ENCODE measurements at regions of chr21 and their contacts with region 1.

Region 1: DNA sequence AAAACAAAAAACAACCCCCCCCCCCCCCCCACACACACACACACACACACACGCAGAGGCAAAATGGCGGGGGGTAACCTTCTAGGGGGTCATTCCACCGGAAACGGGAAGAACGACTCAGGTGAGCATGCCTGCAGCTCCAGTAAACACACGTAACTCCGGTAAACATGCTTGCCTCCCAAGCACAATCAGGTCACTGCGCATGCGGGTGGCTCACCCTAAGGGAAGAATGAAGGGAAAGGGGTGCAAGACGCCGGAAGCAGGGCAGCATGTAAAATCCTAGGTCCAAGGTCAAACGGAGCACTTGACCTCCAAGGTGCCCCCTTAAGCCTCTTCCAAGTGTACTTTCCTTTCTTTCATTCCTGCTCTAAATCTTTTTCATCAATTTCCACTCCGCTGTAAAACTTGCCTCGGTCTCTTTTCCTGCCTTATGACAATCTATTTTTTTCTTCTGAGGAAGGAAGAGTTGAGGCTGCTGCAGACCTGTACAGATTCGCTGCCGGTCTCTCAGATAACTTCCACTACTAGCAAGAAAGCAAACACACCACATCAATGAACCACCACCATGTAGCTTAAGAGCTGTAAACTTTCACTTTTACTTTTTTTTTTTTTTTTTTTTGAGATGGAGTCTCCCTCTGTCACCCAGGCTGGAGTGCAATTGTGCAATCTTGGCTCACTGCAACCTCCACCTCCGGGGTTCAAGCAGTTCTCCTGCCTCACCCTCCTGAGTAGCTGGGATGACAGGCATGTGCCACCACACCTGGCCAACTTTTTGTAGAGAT is 21.0 kb upstream of the CBR3 start:
- DNase-seq: no peak
- H3K4me3 ChIP-seq: no peak overlapping the region
- H3K27ac ChIP-seq: no peak overlapping the region
- H3K4me1 ChIP-seq: peaks cover 0 to 10% (median 5%) of the 10 kb centered on the region in 4 experiments; a peak in 6 of 7 replicates
- H3K27me3 ChIP-seq: no peaks in the 10 kb centered on the region
- CTCF ChIP-seq: no peak
- EP300 ChIP-seq: no peak
- POLR2A ChIP-seq: 0 out of 3 replicates have a peak, but pooled peaks of 1 of the 2 experiments have one; percentile 11
- RAD21 ChIP-seq: no peak

Region 2: GRCh38 chr21:36028127-36029069 is 85.4 kb before region 1 on chr21:
- CTCF ChIA-PET with region 1: interaction called, 16 read pairs
- POLR2A ChIA-PET with region 1: no interaction called
- DNase-seq: peak; percentile 50 to 85
- H3K4me3 ChIP-seq: no peak overlapping the region
- H3K27ac ChIP-seq: no peak overlapping the region
- H3K4me1 ChIP-seq: peaks cover 0 to 7% (median under 1%) of the 10 kb centered on the region in 4 experiments; a peak in 3 of 7 replicates
- H3K27me3 ChIP-seq: no peaks in the 10 kb centered on the region
- CTCF ChIP-seq: peak; percentile 93 to 96 (median 94)
- EP300 ChIP-seq: no peak
- POLR2A ChIP-seq: no peak
- RAD21 ChIP-seq: peak; percentile 99 to 100

Region 3: DNA sequence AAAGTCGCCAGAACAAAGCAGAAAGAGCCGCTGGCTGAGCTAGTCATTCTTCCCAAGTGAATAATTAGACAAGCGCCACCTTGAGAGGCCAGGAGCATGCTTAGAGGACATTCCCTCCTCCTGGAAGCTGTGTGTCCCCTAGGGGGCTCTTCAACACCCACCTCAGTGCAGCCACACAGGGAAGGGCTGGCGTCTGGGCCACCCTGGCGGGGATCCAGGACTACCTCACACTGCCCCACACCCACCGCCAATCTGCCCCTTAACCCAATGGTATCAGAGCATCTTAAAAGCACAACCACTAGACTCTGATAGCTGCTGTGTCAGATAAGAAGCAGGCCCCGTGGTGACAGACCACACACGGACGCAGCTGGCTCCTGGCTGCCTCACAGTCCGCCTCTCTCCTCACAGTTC is 78.5 kb before region 1 on chr21:
- CTCF ChIA-PET with region 1: interaction called, 35 read pairs
- POLR2A ChIA-PET with region 1: interaction called, 3 read pairs
- DNase-seq: no peak
- H3K4me3 ChIP-seq: no peak overlapping the region
- H3K27ac ChIP-seq: 0 out of 2 replicates have a peak overlapping the region, but pooled peaks have one; percentile 16
- H3K4me1 ChIP-seq: peaks cover 0 to 6% (median under 1%) of the 10 kb centered on the region in 4 experiments; a peak in 3 of 7 replicates
- H3K27me3 ChIP-seq: no peaks in the 10 kb centered on the region
- CTCF ChIP-seq: peak; percentile 27 to 53 (median 46)
- EP300 ChIP-seq: no peak
- POLR2A ChIP-seq: no peak
- RAD21 ChIP-seq: peak in 1 of 2 experiments; percentile 25; a peak in 1 of 4 replicates

Region 4: DNA sequence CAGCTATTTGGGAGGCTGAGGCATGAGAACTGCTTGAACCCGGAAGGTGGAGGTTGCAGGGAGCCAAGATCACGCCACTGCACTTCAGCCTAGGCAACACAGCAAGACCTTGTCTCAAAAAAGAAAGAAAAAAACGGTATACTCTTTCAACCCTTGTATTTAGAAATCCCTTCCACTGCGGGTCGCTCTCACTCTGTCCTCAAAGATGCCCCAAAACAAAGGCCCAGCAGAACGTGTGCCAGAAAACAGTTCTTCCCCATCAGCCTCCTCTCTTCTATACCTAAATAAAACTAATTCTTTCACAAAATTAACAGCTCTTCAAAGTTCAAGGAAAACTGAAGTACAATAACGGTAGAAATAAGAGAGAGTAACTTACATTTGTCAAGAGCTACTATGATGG is 66.7 kb before region 1 on chr21:
- CTCF ChIA-PET with region 1: interaction called, 13 read pairs
- POLR2A ChIA-PET with region 1: interaction called, 5 read pairs
- DNase-seq: no peak
- H3K4me3 ChIP-seq: no peak overlapping the region
- H3K27ac ChIP-seq: no peak overlapping the region
- H3K4me1 ChIP-seq: no peaks in the 10 kb centered on the region
- H3K27me3 ChIP-seq: no peaks in the 10 kb centered on the region
- CTCF ChIP-seq: peak in 1 of 3 experiments; percentile 8; a peak in 1 of 4 replicates
- EP300 ChIP-seq: no peak
- POLR2A ChIP-seq: no peak
- RAD21 ChIP-seq: peak; percentile 17 to 46; a peak in 3 of 4 replicates

Region 5: DNA sequence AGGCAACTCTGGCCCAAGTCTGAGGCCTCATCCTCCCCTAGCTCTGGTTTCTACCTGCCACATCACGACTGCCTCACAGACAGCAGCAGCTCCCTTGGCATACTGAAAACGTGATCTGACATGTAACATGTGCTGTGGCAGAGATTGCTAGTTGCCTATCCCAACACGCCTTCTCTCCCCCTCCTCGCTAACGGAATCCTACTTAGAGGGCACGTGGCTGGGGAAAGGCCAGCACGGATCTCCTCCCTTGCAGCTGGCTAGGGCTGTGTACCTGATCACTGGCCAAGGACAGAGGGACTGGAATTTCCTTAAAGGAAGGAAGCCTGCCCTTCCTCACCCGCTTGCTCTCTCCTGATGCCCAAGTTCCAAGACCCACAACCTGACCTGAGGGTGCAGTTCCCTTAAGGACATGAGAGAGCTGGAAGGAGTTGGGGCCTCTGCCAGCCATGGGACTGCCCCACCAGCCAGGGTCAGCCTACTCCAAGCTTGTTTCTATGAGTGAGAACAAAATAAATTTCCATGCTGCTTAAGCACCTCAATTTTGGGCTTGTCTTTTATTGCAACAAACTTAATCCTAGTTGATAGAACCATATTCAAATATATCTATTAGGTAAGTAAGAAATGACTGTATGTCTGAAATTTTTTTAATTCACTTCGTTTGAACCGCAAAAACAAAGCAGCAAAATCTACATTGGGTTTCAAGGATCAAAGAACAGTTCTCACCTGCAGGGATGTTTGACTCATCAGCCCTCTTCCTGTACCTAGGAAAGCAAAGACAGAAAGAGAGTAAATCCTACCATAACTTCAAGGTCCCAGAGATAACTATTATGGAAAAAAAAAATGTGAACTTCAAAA is 60.8 kb before region 1 on chr21:
- CTCF ChIA-PET with region 1: interaction called, 19 read pairs
- POLR2A ChIA-PET with region 1: interaction called, 5 read pairs
- DNase-seq: no peak
- H3K4me3 ChIP-seq: no peak overlapping the region
- H3K27ac ChIP-seq: no peak overlapping the region; the same call in 1 of the 2 replicates
- H3K4me1 ChIP-seq: no peaks in the 10 kb centered on the region
- H3K27me3 ChIP-seq: no peaks in the 10 kb centered on the region
- CTCF ChIP-seq: no peak
- EP300 ChIP-seq: no peak
- POLR2A ChIP-seq: no peak
- RAD21 ChIP-seq: no peak

Region 6: GRCh38 chr21:36060159-36060921 is 53.5 kb before region 1 on chr21 and contains the start of gene SETD4:
- CTCF ChIA-PET with region 1: interaction called, 19 read pairs
- POLR2A ChIA-PET with region 1: interaction called, 10 read pairs
- DNase-seq: peak; percentile 75 to 97
- H3K4me3 ChIP-seq: peak within 1 kb of the TSS; percentile 67 to 96 (median 95)
- H3K27ac ChIP-seq: peak within 1 kb of the TSS; percentile 85
- H3K4me1 ChIP-seq: peaks cover 0 to 4% (median 3%) of the 10 kb centered on the region in 4 experiments; a peak in 5 of 7 replicates
- H3K27me3 ChIP-seq: no peaks in the 10 kb centered on the region
- CTCF ChIP-seq: no peak
- EP300 ChIP-seq: no peak
- POLR2A ChIP-seq: peak; percentile 42 to 87
- RAD21 ChIP-seq: no peak; a peak in 2 of 4 replicates
- total RNA-seq, gene SETD4: 46.6 and 47.4 TPM in 2 replicates

Region 7: GRCh38 chr21:36156339-36156814 is 42.5 kb after region 1 on chr21:
- CTCF ChIA-PET with region 1: no interaction called
- POLR2A ChIA-PET with region 1: no interaction called
- DNase-seq: peak; percentile 99 to 100
- H3K4me3 ChIP-seq: peak overlapping the region; percentile 72 to 91 (median 75)
- H3K27ac ChIP-seq: no peak overlapping the region
- H3K4me1 ChIP-seq: peaks cover 0 to 5% (median 2%) of the 10 kb centered on the region in 4 experiments; a peak in 5 of 7 replicates
- H3K27me3 ChIP-seq: peaks cover 5 to 21% (median 12%) of the 10 kb centered on the region in 4 experiments; a peak in 6 of 7 replicates
- CTCF ChIP-seq: no peak
- EP300 ChIP-seq: no peak
- POLR2A ChIP-seq: no peak; a peak in 1 of 3 replicates
- RAD21 ChIP-seq: no peak

Region 8: GRCh38 chr21:36193207-36193606 is 79.4 kb after region 1 on chr21:
- CTCF ChIA-PET with region 1: no interaction called
- POLR2A ChIA-PET with region 1: no interaction called
- DNase-seq: no peak
- H3K4me3 ChIP-seq: no peak overlapping the region
- H3K27ac ChIP-seq: no peak overlapping the region
- H3K4me1 ChIP-seq: no peaks in the 10 kb centered on the region; a peak in 2 of 7 replicates
- H3K27me3 ChIP-seq: no peaks in the 10 kb centered on the region; a peak in 1 of 7 replicates
- CTCF ChIP-seq: no peak
- EP300 ChIP-seq: no peak
- POLR2A ChIP-seq: no peak
- RAD21 ChIP-seq: no peak